Activated T-helper 2 cell treated with anti-CD3 and anti-CD28 coated beads, Interferon-gamma antibody, Interleukin-2, Interleukin-4, amounts not matched to agents 10 μg/mL and 5 μg/mL and 100 μg/mL, durations not matched to agents 14 hours and 24 hours and 36 hours (primary cell): ENCODE measurements at regions of chr10 and their contacts with region 1.

Region 1: GRCh38 chr10:74738985-74739567 is 87.3 kb upstream of the KAT6B start:
- DNase-seq: peak; percentile 28
- H3K4me3 Mint-ChIP-seq: no peak overlapping the region
- H3K27ac Mint-ChIP-seq: peak overlapping the region; percentile 85
- H3K4me1 Mint-ChIP-seq: peaks cover 21% of the 10 kb centered on the region
- H3K27me3 Mint-ChIP-seq: no peaks in the 10 kb centered on the region

Region 2: GRCh38 chr10:74262856-74263255 is 476.2 kb before region 1 on chr10:
- intact Hi-C with region 1: loop called (anchors 5 kb)
- DNase-seq: no peak
- H3K4me3 Mint-ChIP-seq: no peak overlapping the region
- H3K27ac Mint-ChIP-seq: no peak overlapping the region
- H3K4me1 Mint-ChIP-seq: peaks cover 13% of the 10 kb centered on the region
- H3K27me3 Mint-ChIP-seq: no peaks in the 10 kb centered on the region

Region 3: DNA sequence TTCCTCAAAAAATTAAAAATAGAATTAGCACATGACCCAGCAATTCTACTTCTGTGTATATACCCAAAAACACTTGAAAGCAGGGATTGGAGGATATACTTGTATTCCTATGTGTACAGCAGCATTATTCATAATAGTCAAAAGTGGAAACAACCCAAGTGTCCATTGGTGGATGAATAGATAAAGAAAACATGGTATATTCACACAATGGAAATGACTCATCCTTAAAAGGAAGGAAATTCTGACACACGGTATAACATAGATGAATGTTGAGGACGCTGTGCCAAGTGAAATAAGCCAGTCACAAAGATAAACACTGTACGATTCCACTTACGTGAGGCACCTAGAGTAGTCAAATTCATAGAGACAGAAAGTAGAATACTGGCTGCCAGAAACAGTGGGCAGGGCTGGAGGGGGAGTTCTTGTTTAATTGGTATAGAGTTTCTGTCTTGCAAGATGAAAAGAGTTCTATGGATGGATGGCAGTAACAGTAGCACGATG is 60.7 kb after region 1 on chr10:
- intact Hi-C with region 1: loop called (anchors 1 kb)
- DNase-seq: peak; percentile 12
- H3K4me3 Mint-ChIP-seq: no peak overlapping the region
- H3K27ac Mint-ChIP-seq: peak overlapping the region; percentile 68
- H3K4me1 Mint-ChIP-seq: peaks cover 14% of the 10 kb centered on the region
- H3K27me3 Mint-ChIP-seq: peaks cover 2% of the 10 kb centered on the region